ENCODE measurements at regions of chr15 and their contacts with region 1.

Region 1: DNA sequence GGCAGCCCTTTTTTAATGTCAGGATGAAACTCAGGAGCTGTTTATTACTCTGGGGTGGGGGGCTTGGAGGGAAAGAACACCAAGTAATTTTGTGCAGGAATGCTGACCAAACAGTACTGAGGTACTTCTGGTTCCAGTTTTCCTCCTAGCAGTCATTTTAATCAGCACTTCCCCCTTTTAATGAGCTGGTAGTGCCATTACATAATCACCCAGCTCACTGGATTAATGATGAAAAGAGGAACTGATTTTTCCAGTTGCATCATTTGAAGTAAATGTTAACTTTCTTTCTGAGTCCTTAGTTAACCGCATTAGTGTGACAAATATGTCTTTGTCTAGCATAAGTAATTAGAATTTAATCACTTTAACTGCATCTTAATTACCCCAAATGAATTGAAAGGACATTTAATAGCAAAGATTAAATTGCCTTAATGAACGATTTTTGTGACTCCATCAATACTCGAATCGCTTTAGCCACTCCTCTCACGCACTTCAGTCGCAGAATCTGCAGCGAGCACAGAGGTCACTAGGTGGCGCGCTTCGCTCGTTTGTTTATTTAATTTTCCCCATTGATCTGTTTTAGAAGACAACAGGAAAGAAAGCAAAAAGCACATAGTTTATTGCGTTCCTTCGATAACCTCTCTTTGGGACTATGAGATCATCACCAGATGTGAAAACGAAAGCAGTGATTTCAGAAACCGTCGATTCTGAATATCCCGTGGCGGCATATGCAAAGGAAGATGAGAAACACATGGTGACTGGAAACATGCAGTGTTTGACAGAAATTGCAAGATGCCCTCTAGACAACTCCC is 9.8 kb downstream of the ONECUT1 start:
- DNase-seq: peak; percentile 81
- H3K4me3 Mint-ChIP-seq: peak overlapping the region; percentile 14
- H3K27ac Mint-ChIP-seq: no peak overlapping the region
- H3K4me1 Mint-ChIP-seq: peaks cover 28% of the 10 kb centered on the region
- H3K27me3 Mint-ChIP-seq: peaks cover 66% of the 10 kb centered on the region

Region 2: GRCh38 chr15:52609593-52609992 is 170.8 kb before region 1 on chr15:
- CTCF ChIA-PET with region 1: no interaction called
- POLR2A ChIA-PET with region 1: no interaction called
- intact Hi-C with region 1: no loop called
- DNase-seq: no peak
- H3K4me3 Mint-ChIP-seq: no peak overlapping the region
- H3K27ac Mint-ChIP-seq: no peak overlapping the region
- H3K4me1 Mint-ChIP-seq: no peaks in the 10 kb centered on the region
- H3K27me3 Mint-ChIP-seq: no peaks in the 10 kb centered on the region

Region 3: GRCh38 chr15:52805351-52806283 is 25.2 kb after region 1 on chr15:
- CTCF ChIA-PET with region 1: interaction called, 18 read pairs
- POLR2A ChIA-PET with region 1: interaction called, 3 read pairs
- intact Hi-C with region 1: loop called (anchors 2 kb)
- DNase-seq: no peak
- H3K4me3 Mint-ChIP-seq: peak overlapping the region; percentile 50
- H3K27ac Mint-ChIP-seq: no peak overlapping the region
- H3K4me1 Mint-ChIP-seq: peaks cover 18% of the 10 kb centered on the region
- H3K27me3 Mint-ChIP-seq: peaks cover 72% of the 10 kb centered on the region

Region 4: DNA sequence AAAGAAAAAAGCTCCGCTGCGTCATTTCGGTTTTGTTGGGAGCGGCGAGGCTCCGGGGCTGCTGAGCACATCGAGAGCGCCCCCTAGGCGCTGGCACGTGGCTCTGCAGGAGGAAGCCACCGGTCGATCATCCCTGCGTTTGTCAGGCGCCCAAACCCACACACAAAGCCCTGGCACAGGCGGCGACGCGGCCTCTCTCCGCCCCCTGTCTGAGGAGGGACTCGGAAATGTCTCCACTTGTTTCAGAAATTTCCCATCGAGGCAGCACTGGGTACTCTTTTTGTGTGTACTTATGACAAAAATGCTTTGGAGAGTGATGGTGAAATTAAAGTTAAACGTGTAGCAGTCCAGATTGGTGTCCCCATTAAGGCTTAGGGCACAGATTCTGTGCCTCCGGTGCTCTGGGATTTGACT is 417.1 kb after region 1 on chr15:
- CTCF ChIA-PET with region 1: interaction called, 3 read pairs
- POLR2A ChIA-PET with region 1: no interaction called
- intact Hi-C with region 1: loop called (anchors 1 kb)
- DNase-seq: peak; percentile 59
- H3K4me3 Mint-ChIP-seq: no peak overlapping the region
- H3K27ac Mint-ChIP-seq: no peak overlapping the region
- H3K4me1 Mint-ChIP-seq: no peaks in the 10 kb centered on the region
- H3K27me3 Mint-ChIP-seq: peaks cover 2% of the 10 kb centered on the region

Region 5: DNA sequence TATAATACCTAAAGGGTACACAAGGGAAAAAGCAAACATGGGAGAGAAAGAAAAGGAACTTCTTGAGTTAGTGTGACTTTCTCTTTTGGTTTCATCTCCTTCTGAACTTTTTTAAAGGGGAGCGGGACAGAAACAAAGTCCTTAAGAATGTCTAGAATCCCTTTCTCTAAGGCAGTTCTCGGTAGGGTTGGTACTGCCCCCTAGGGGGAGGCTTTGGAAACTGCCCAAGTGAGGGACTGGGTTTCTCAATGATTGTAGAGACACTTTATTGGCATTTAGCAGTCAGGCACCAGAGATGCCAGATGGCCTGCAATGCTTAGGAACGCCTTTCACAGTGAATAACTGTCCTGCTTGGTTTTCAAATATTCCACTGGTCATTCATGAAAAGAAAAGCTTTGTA is 806.4 kb after region 1 on chr15:
- CTCF ChIA-PET with region 1: no interaction called
- POLR2A ChIA-PET with region 1: no interaction called
- intact Hi-C with region 1: loop called (anchors 10 kb)
- DNase-seq: peak; percentile 20
- H3K4me3 Mint-ChIP-seq: no peak overlapping the region
- H3K27ac Mint-ChIP-seq: no peak overlapping the region
- H3K4me1 Mint-ChIP-seq: no peaks in the 10 kb centered on the region
- H3K27me3 Mint-ChIP-seq: no peaks in the 10 kb centered on the region

Region 6: GRCh38 chr15:53716909-53717876 is 936.8 kb after region 1 on chr15:
- CTCF ChIA-PET with region 1: no interaction called
- POLR2A ChIA-PET with region 1: no interaction called
- intact Hi-C with region 1: loop called (anchors 5 kb)
- DNase-seq: no peak
- H3K4me3 Mint-ChIP-seq: no peak overlapping the region
- H3K27ac Mint-ChIP-seq: no peak overlapping the region
- H3K4me1 Mint-ChIP-seq: no peaks in the 10 kb centered on the region
- H3K27me3 Mint-ChIP-seq: no peaks in the 10 kb centered on the region